Naive thymus-derived CD4-positive, alpha-beta T cell (primary cell): ENCODE measurements at regions of chr1 and their contacts with region 1.

Region 1: GRCh38 chr1:2148691-2149090 is 45.9 kb downstream of the FAAP20 start:
- DNase-seq: peak in 8 of 9 donors; percentile 33 to 79 (median 67)
- ATAC-seq: peak; percentile 77
- H3K4me3 ChIP-seq: peak overlapping the region; percentile 51
- H3K4me3 Mint-ChIP-seq: no peak overlapping the region
- H3K27ac ChIP-seq: peak overlapping the region; percentile 54
- H3K27ac Mint-ChIP-seq: no peak overlapping the region
- H3K4me1 ChIP-seq: peaks cover 35 to 45% of the 10 kb centered on the region in 2 donors
- H3K4me1 Mint-ChIP-seq: peaks cover 0 to 27% (median 18%) of the 10 kb centered on the region in 7 donors
- H3K27me3 ChIP-seq: no peaks in the 10 kb centered on the region
- H3K27me3 Mint-ChIP-seq: no peaks in the 10 kb centered on the region

Region 2: DNA sequence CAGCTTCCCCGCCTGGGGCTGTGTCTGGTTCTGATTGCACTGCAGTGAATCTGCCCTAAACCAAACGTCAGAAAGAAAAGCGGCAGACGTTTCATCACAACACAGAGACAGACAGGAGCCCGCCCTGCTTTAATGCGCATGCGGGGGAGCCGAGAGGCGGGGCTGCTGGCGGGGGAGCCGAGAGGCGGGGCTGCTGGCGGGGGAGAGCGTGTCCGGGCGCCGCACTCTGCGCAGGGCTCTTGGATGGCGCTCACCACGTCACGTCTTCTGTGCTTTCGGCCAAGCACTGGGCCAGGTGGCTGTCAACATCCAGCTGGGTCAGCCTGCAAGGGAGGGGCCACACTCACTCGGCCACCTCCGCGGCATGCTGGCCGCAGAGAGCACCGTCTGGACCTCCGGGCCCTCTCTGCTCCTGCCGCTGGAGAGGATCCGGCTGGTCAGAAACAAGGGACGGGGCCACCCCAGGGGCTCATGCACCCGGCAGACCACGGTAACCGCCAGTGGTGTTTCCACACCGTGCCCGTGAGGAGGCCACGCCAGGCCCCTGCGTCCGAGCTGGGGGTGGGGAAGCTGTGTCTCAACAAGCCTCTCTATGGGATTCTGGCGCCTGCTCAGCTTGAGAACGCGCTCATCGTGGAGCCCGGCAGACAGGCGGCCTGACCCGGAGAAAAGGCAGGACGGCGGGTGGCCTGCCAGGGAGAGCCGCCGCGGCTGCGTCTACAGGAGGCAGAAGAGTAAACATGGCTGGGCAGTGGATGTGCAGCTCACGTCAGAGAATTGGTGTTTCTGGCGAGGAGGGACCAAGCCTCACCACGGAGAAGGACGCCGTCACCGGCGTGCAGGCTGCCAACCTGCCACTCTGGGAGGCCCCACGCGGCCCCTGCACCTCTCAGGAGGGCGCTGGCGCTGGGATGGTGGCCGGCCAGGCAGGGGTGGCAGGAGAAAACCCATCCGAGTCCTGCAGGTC is 41.1 kb after region 1 on chr1:
- CTCF ChIA-PET with region 1: no interaction called
- POLR2A ChIA-PET with region 1: interaction called, 3 read pairs
- intact Hi-C with region 1: loop called in 1 of 2 experiments (anchors 5 kb)
- DNase-seq: peak; percentile 78 to 95 (median 91)
- ATAC-seq: peak; percentile 95
- H3K4me3 ChIP-seq: peak overlapping the region; percentile 80
- H3K4me3 Mint-ChIP-seq: peak overlapping the region; percentile 66 to 86 (median 80)
- H3K27ac ChIP-seq: peak overlapping the region; percentile 82
- H3K27ac Mint-ChIP-seq: peak overlapping the region; percentile 68 to 99 (median 95)
- H3K4me1 ChIP-seq: peaks cover 6 to 9% of the 10 kb centered on the region in 2 donors
- H3K4me1 Mint-ChIP-seq: peaks cover 0 to 23% (median 11%) of the 10 kb centered on the region in 7 donors
- H3K27me3 ChIP-seq: no peaks in the 10 kb centered on the region
- H3K27me3 Mint-ChIP-seq: no peaks in the 10 kb centered on the region

Region 3: DNA sequence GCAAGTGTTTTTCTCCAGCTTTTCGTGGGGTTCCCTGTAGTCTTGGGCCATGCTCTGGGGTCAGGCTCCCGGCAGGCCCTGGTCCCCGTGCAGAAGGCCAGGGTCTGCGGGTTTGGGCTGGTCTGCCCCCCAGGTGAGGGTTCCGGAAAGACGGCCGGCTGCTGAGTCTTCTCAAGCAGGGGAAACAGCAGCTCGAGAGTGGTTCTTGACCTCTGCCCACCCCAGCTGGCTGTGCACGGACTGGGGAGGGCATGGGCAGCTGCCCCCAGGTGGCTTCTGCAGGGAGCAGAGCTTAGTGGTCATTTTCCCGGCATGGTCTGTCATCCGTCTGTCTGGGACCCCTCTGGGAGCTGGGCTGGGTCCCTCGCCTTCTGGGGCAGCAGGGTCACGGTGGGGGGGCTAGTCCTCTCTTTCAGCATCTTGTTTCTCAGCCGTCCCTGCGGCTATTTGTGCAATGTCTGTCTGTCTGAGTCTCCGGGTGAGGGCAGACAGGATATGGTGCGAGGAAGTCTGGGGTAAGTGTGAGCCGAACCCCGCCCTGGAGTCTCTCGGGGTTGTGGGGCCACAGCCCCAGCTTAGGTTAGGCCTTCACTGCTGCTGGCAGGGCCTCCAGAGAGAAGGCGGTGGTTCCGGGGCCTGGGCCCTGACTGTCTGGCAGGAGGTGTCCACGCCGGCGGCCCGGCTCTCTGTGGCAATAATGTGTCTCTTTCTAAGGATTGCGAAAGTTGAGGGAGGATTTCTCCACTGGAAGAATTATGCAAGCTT is 85.5 kb after region 1 on chr1:
- CTCF ChIA-PET with region 1: no interaction called
- POLR2A ChIA-PET with region 1: no interaction called
- intact Hi-C with region 1: no loop called
- DNase-seq: peak; percentile 52 to 82 (median 72)
- ATAC-seq: peak; percentile 80
- H3K4me3 ChIP-seq: peak overlapping the region; percentile 83
- H3K4me3 Mint-ChIP-seq: peak overlapping the region; percentile 89 to 100 (median 94)
- H3K27ac ChIP-seq: peak overlapping the region; percentile 78
- H3K27ac Mint-ChIP-seq: peak overlapping the region; percentile 90 to 99 (median 97)
- H3K4me1 ChIP-seq: peaks cover 64 to 78% of the 10 kb centered on the region in 2 donors
- H3K4me1 Mint-ChIP-seq: peaks cover 50 to 70% (median 61%) of the 10 kb centered on the region in 7 donors
- H3K27me3 ChIP-seq: no peaks in the 10 kb centered on the region
- H3K27me3 Mint-ChIP-seq: no peaks in the 10 kb centered on the region